Naive thymus-derived CD4-positive, alpha-beta T cell (primary cell): ENCODE measurements at regions of chr18 and their contacts with region 1.

Region 1: GRCh38 chr18:69636529-69637301 is 236.0 kb downstream of the DOK6 start:
- DNase-seq: peak in 6 of 9 donors; percentile 16 to 38 (median 24)
- ATAC-seq: peak; percentile 61
- H3K4me3 ChIP-seq: no peak overlapping the region
- H3K4me3 Mint-ChIP-seq: no peak overlapping the region
- H3K27ac ChIP-seq: no peak overlapping the region
- H3K27ac Mint-ChIP-seq: peak overlapping the region in 1 of 9 donors; percentile 12
- H3K4me1 ChIP-seq: no peaks in the 10 kb centered on the region
- H3K4me1 Mint-ChIP-seq: no peaks in the 10 kb centered on the region
- H3K27me3 ChIP-seq: no peaks in the 10 kb centered on the region
- H3K27me3 Mint-ChIP-seq: peaks cover 0 to 5% (median 0%) of the 10 kb centered on the region in 5 donors

Region 2: GRCh38 chr18:69208545-69208944 is 428.2 kb before region 1 on chr18:
- CTCF ChIA-PET with region 1: no interaction called
- POLR2A ChIA-PET with region 1: no interaction called
- intact Hi-C with region 1: no loop called
- DNase-seq: no peak
- ATAC-seq: no peak
- H3K4me3 ChIP-seq: no peak overlapping the region
- H3K4me3 Mint-ChIP-seq: no peak overlapping the region
- H3K27ac ChIP-seq: no peak overlapping the region
- H3K27ac Mint-ChIP-seq: no peak overlapping the region
- H3K4me1 ChIP-seq: no peaks in the 10 kb centered on the region
- H3K4me1 Mint-ChIP-seq: no peaks in the 10 kb centered on the region
- H3K27me3 ChIP-seq: no peaks in the 10 kb centered on the region
- H3K27me3 Mint-ChIP-seq: no peaks in the 10 kb centered on the region

Region 3: GRCh38 chr18:70072678-70073077 is 436.0 kb after region 1 on chr18:
- CTCF ChIA-PET with region 1: no interaction called
- POLR2A ChIA-PET with region 1: no interaction called
- intact Hi-C with region 1: loop called (anchors 1 kb)
- DNase-seq: peak in 3 of 9 donors; percentile 3 to 35 (median 3)
- ATAC-seq: no peak
- H3K4me3 ChIP-seq: no peak overlapping the region
- H3K4me3 Mint-ChIP-seq: no peak overlapping the region
- H3K27ac ChIP-seq: no peak overlapping the region
- H3K27ac Mint-ChIP-seq: no peak overlapping the region
- H3K4me1 ChIP-seq: no peaks in the 10 kb centered on the region
- H3K4me1 Mint-ChIP-seq: peaks cover 0 to 6% (median 4%) of the 10 kb centered on the region in 7 donors
- H3K27me3 ChIP-seq: no peaks in the 10 kb centered on the region
- H3K27me3 Mint-ChIP-seq: no peaks in the 10 kb centered on the region

Region 4: DNA sequence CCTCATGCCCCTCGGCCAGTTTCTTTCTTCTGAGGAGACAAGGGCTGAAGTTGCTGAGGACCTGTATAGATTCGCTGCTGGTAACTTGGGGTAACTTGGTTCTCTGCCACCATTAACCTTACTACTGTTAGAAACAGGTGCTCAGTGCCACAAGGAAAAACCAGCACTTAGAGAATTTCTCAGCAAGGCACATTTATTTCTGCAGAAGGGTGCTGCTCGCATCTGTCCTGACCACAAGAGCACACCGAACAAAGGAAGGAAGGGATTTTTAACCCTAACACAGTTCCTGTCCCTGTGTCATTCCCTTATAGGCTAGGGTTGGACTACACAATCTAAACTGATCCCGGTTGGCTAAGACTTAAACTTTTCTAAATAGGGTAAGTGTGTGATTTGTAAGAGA is 806.2 kb after region 1 on chr18:
- CTCF ChIA-PET with region 1: no interaction called
- POLR2A ChIA-PET with region 1: no interaction called
- intact Hi-C with region 1: loop called in 1 of 2 experiments (anchors 10 kb)
- DNase-seq: no peak
- ATAC-seq: no peak
- H3K4me3 ChIP-seq: no peak overlapping the region
- H3K4me3 Mint-ChIP-seq: no peak overlapping the region
- H3K27ac ChIP-seq: no peak overlapping the region
- H3K27ac Mint-ChIP-seq: no peak overlapping the region
- H3K4me1 ChIP-seq: no peaks in the 10 kb centered on the region
- H3K4me1 Mint-ChIP-seq: no peaks in the 10 kb centered on the region
- H3K27me3 ChIP-seq: peaks cover 0 to 5% of the 10 kb centered on the region in 2 donors
- H3K27me3 Mint-ChIP-seq: peaks cover 0 to 18% (median 7%) of the 10 kb centered on the region in 5 donors